PC-3 (cell line): ENCODE measurements at regions of chrX and their contacts with region 1.

Region 1: GRCh38 chrX:103845165-103845653 is 13.2 kb upstream of the RAB9B start:
- DNase-seq: peak; percentile 80
- ATAC-seq: peak; percentile 95
- H3K4me3 ChIP-seq: peak overlapping the region; percentile 13; the same call in 1 of the 2 replicates
- H3K27ac ChIP-seq: no peak overlapping the region
- H3K4me1 ChIP-seq: peaks cover 8% of the 10 kb centered on the region; the same call in 1 of the 2 replicates
- H3K27me3 ChIP-seq: no peaks in the 10 kb centered on the region
- CTCF ChIP-seq: peak; percentile 84

Region 2: GRCh38 chrX:103423955-103424638 is 421.1 kb before region 1 on chrX:
- CTCF ChIA-PET with region 1: no interaction called
- POLR2A ChIA-PET with region 1: no interaction called
- intact Hi-C with region 1: no loop called
- DNase-seq: no peak
- ATAC-seq: no peak
- H3K4me3 ChIP-seq: no peak overlapping the region
- H3K27ac ChIP-seq: no peak overlapping the region
- H3K4me1 ChIP-seq: no peaks in the 10 kb centered on the region
- H3K27me3 ChIP-seq: no peaks in the 10 kb centered on the region
- CTCF ChIP-seq: no peak

Region 3: GRCh38 chrX:103806862-103807474 is 38.2 kb before region 1 on chrX:
- CTCF ChIA-PET with region 1: no interaction called
- POLR2A ChIA-PET with region 1: no interaction called
- intact Hi-C with region 1: no loop called
- DNase-seq: no peak
- ATAC-seq: no peak
- H3K4me3 ChIP-seq: no peak overlapping the region
- H3K27ac ChIP-seq: no peak overlapping the region
- H3K4me1 ChIP-seq: peaks cover 9% of the 10 kb centered on the region; the same call in 1 of the 2 replicates
- H3K27me3 ChIP-seq: no peaks in the 10 kb centered on the region
- CTCF ChIP-seq: no peak

Region 4: DNA sequence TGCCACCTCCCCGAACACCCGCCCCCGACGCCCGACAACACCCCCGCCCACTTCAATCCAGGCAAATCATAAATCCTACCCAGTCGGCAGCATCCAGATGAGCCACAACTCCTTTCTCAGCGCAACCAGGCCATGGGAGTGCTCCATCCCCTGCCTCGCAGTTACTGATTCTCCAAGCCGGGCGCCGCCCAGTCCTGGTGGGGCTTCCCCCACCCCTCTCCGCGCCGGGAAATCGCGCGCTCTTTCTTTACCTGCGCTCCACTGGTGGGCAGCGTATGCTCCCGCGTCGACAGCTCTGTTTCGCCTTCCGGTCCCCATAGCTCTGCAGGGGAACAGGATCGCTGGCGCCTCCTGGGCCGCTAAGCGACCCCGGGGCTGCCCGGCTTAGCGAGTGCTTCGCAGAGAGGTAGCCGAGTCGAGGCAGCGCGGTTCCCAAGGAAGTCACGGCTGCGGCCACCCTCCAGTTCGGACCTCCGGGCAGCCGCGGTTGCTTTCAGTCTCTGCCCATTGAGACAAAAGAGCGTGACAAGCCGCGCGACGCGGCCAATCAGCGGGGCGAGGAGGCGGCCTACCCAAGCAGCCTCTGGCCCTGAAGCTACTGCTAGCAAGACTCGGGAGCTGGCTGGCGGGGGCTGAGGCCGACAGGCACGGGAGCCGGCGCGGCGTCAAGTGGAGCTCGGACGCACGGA is 73.5 kb after region 1 on chrX:
- CTCF ChIA-PET with region 1: interaction called, 10 read pairs
- POLR2A ChIA-PET with region 1: no interaction called
- intact Hi-C with region 1: loop called (anchors 1 kb)
- DNase-seq: peak; percentile 72
- ATAC-seq: peak; percentile 82
- H3K4me3 ChIP-seq: peak overlapping the region; percentile 82
- H3K27ac ChIP-seq: peak overlapping the region; percentile 38
- H3K4me1 ChIP-seq: peaks cover 6% of the 10 kb centered on the region
- H3K27me3 ChIP-seq: no peaks in the 10 kb centered on the region
- CTCF ChIP-seq: no peak

Region 5: DNA sequence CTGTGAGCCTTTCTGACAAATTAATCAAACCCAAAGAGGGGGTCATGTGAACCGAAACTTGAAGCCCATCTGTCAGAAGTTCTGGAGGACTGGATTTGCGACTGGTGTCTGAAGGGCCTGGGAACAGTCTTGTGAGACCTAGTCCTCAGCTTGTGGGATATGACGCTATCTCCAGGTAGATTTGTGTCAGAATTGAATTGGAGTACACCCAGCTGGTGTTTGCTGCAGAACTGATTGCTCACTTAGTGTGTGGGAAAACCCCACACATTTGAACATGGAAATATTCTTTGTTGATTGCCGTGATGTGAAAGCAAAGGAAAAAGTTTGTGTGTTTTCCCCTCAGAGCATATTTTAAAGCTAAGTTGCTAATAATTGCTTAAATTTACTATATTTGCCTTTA is 86.9 kb after region 1 on chrX:
- CTCF ChIA-PET with region 1: interaction called, 4 read pairs
- POLR2A ChIA-PET with region 1: no interaction called
- intact Hi-C with region 1: loop called (anchors 5 kb)
- DNase-seq: no peak
- ATAC-seq: no peak
- H3K4me3 ChIP-seq: no peak overlapping the region
- H3K27ac ChIP-seq: no peak overlapping the region
- H3K4me1 ChIP-seq: no peaks in the 10 kb centered on the region
- H3K27me3 ChIP-seq: no peaks in the 10 kb centered on the region
- CTCF ChIP-seq: no peak

Region 6: DNA sequence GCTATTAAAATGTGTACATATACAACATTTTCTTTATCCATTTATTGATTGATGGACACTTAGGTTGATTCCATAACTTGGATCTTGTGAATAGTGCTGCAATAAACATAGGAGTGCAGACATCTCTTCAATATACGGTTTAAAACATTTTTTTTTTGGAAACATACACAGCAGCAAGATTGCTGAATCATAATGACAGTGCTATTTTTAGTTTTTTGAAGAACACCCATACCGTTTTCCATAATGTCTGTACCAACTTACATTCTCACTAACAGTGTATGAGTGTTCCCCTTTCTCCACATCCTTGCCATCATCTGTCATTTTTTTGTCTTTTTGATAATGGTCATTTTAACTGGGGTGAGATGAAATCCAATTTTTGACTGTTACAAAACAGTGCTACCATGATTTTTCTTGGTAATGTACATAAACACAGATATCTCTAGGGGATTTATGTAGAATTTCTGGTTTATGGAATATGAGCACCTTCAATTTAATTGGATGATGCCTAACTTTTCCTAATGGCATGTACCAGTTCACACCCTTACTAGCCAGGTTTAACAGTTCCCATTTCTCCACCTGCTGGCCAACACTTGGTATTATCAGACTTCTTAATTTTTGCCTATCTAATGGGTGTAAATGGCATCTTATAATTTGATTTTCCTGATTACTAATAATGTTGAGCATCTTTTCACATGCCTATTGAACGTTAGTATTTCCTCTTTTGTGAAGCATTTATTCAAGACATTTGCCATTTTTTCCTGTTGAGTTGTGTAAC is 96.2 kb after region 1 on chrX:
- CTCF ChIA-PET with region 1: interaction called, 14 read pairs
- POLR2A ChIA-PET with region 1: no interaction called
- intact Hi-C with region 1: loop called (anchors 1 kb)
- DNase-seq: peak; percentile 44
- ATAC-seq: peak; percentile 29
- H3K4me3 ChIP-seq: no peak overlapping the region
- H3K27ac ChIP-seq: no peak overlapping the region
- H3K4me1 ChIP-seq: no peaks in the 10 kb centered on the region; the same call in 1 of the 2 replicates
- H3K27me3 ChIP-seq: no peaks in the 10 kb centered on the region
- CTCF ChIP-seq: peak; percentile 71

Region 7: GRCh38 chrX:104113222-104113965 is 268.2 kb after region 1 on chrX:
- CTCF ChIA-PET with region 1: interaction called, 3 read pairs
- POLR2A ChIA-PET with region 1: no interaction called
- intact Hi-C with region 1: loop called (anchors 1 kb)
- DNase-seq: peak; percentile 72
- ATAC-seq: peak; percentile 89
- H3K4me3 ChIP-seq: peak overlapping the region; percentile 75
- H3K27ac ChIP-seq: no peak overlapping the region
- H3K4me1 ChIP-seq: no peaks in the 10 kb centered on the region; the same call in 1 of the 2 replicates
- H3K27me3 ChIP-seq: peaks cover 7% of the 10 kb centered on the region
- CTCF ChIP-seq: peak; percentile 64

Region 8: DNA sequence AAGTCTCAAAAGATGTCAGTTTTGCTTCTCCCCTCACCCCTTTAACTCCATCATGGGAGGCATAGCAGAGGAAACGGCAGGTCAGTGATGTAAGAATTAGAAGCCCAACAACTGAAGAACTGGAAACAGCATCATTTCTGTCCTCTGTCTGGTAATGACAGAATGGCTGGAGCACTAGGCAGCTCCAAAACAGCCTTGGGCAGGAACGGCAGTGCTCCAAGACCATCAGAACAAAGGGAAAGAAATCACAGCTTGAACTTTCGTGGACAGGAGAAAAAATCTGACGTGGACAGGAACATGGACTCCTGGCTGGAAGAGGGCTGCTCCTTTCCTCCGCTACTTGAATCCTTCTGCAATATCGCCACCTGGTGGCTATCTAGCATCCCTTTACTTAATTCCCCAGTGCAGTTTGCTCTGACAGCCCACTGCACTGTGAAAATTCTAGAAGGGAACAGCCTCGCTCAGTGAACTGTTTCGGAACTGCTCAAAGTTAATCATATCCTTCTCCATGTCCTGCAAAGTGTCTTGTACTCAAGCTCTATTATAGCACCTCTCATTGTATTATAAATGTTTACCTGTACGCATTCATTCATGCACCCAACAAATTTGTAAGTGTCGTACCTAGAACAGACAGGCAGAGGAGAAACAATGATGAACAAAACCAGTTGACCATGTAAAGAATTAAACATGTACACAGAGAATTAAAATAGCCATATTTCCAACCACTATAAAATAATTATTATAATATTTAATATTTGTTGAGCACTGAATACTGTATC is 291.2 kb after region 1 on chrX:
- CTCF ChIA-PET with region 1: no interaction called
- POLR2A ChIA-PET with region 1: no interaction called
- intact Hi-C with region 1: loop called (anchors 1 kb)
- DNase-seq: peak; percentile 79
- ATAC-seq: peak; percentile 99
- H3K4me3 ChIP-seq: peak overlapping the region; percentile 63
- H3K27ac ChIP-seq: no peak overlapping the region
- H3K4me1 ChIP-seq: no peaks in the 10 kb centered on the region
- H3K27me3 ChIP-seq: no peaks in the 10 kb centered on the region
- CTCF ChIP-seq: peak; percentile 76